ENCODE measurements at regions of chr13 and their contacts with region 1.

Region 1: GRCh38 chr13:95403828-95404522 is 102.7 kb upstream of the ABCC4 start:
- DNase-seq: peak; percentile 94

Region 2: DNA sequence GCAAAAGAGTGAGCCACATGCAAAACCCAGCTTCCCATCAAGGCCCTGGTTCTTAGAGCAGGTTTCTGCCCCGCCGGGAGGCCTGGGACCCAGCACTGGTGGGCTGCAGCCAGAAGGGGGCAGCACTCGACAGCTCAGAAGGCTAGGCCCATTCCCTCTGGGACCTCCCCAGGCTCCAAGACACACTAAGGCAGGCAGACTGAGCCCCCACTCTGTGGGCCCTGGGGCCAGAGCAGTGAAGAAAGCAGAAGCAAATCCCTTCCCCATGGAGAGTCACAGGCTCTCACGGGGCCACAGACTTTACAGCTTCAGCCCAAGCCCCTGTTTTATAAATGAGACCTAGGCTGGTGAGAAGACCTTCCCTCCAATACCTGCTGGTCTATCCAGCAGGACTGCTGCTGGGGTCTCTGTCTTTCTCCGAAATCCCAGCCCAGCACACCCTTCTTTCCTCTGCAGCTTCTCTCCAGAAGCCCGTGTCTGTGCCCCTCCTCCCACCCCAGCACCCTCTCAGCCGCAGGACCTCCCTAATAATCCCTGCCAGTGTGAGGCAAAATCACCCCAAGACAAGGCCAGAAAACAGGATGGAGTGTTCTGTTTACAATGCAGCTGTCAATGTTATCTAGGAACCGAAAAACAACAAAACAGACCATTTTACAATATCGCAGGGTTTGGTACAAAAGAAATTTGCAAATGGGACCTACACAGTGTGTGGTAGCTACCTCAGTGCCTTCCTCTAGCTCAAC is 212.0 kb before region 1 on chr13:
- intact Hi-C with region 1: loop called (anchors 5 kb)
- DNase-seq: peak; percentile 91

Region 3: DNA sequence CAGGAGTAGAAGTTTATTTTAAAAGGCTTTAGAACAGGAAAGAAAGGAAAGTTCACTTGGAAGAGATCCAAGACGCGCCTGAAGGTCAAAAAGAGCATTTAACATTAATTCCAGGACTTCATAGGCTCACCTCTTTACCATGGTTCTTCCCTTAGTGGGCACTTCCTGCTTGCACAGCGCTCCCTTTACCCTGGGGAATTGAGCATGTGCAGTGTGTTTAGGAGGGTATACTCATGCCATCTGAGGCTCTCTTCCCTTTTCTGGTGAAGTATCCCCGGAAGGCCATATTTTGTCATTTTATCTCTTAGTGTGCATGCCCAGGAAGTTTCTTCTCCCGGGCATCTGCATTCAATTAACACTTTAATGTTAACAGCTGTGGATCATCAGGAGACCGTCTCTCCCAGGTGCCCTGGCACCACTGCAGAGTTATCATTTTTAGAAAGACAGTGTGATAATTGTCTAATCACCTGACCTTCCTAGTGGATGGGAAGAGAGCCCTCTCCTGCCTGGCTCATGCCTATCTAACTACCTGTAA is 36.6 kb before region 1 on chr13:
- intact Hi-C with region 1: no loop called
- DNase-seq: no peak

Region 4: DNA sequence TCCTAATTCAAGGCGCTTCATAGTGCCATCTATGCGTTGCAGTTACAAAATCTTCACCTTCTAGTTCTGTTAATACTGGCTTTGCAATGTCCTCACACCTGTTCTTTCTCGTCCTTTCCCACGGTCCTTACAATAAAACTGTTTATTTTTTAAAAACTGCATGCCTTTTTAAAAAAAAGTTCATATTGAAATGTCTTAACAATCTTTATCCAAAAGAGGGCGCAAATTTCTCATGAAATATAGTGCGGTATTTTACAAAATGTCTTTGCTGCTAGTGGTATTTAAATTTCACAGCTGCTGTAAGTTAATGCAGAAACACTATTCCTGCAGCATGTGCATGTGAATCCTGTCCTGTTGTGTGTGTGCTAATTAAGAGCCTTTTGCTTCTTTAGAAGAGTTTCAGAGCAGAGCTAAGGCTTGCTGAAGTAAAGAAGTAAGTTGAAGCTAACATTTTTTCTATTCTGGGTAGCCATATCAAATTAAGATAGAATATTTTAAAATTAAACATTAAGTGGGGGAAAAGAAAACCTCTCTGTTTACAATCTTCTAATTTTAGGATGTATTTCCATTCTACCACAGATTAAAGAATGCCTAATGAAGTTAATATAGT is 132.8 kb after region 1 on chr13:
- intact Hi-C with region 1: no loop called
- DNase-seq: no peak

Measured in posterior vena cava (tissue), 2 donors.